ENCODE measurements at regions of chr15 and their contacts with region 1.

Region 1: DNA sequence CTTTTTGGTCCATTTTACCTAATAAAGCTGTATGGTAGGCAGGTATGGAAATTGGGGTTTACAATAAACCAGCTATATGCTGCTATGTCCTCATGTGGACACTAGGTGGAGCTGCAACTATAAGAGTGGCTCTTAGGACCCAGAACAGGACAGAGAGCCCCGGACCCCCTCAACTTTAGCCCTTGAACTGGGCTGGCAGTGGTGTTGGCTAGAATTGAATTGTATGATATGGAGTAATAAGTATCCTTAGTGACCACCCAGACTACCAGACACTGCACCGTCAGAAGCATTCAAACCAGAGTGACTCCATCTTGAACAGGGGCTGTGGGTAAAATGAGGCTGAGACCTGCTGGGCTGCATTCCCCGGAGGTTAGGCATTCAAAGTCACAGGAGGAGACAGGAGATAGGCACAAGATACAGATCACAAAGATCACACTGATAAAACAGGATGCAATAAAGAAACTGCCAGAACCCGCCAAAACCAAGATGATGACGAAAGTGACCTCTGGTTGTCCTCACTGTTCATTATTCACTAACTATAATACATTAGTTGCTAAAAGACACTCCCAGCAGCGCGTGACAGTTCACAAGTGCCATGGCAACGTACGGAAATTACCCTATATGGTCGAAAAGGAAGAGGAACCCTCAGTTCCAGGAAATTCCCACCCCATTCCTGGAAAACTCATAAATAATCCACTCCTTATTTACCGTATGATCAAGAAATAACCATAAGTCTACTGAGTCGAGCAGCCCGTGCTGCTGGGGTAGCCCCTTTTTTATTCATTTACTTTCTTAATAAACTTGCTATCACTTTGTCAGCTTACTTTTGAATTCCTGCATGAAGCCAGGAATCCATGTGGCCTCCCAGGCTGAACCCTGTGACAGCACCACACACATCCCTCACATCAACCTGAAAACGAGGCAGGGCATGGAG is 68.7 kb upstream of the BLM start:
- DNase-seq: peak in 2 of 3 donors; percentile 70 to 84
- ATAC-seq: peak; percentile 83
- H3K4me3 ChIP-seq: no peak overlapping the region
- H3K4me1 ChIP-seq: peaks cover 9% of the 10 kb centered on the region
- CTCF ChIP-seq: peak; percentile 71

Region 2: DNA sequence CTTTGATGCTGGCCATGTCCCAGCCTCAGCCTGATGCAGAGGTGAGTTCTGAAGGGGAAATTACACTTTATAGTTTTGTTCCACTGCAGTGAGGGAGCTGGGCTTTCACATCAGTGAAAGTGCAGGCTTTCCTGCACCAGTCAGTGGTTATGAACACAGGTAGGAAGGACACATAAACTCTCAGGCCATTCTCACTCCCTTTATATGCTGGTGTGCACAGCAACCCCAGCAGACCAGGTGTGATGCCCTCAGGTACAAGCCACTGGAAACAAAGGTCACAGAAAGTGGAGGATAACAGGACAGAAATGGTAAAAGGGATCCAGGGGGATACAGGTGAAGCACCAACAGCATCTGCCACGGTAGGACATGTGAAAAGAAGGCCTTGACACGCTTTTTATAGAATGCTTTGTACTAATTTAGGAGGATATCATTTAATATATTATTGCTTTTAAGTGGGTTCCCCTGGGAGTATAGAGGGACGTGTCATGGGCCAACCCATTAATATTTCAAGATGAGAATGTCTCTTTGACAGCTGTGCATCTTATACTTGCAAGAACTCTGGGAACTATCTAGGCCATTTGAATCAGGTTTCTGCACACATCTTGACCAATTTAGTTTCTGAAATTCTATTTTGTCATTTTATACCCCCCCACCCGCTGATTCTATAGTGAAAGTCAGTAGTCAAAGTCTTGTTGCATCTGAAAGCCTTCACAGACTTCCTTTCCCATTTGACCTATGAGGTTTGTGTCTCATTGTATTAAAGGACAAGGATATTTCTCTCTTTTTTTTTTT is 43.8 kb after region 1 on chr15:
- intact Hi-C with region 1: loop called in 1 of 2 experiments (anchors 10 kb)
- DNase-seq: no peak
- ATAC-seq: no peak
- H3K4me3 ChIP-seq: no peak overlapping the region
- H3K4me1 ChIP-seq: no peaks in the 10 kb centered on the region
- CTCF ChIP-seq: no peak

Region 3: GRCh38 chr15:91196769-91197168 is 548.4 kb after region 1 on chr15:
- intact Hi-C with region 1: no loop called
- DNase-seq: no peak
- ATAC-seq: no peak
- H3K4me3 ChIP-seq: no peak overlapping the region
- H3K4me1 ChIP-seq: peaks cover 2% of the 10 kb centered on the region
- CTCF ChIP-seq: no peak